ENCODE measurements at regions of chr19 and their contacts with region 1.

Region 1: DNA sequence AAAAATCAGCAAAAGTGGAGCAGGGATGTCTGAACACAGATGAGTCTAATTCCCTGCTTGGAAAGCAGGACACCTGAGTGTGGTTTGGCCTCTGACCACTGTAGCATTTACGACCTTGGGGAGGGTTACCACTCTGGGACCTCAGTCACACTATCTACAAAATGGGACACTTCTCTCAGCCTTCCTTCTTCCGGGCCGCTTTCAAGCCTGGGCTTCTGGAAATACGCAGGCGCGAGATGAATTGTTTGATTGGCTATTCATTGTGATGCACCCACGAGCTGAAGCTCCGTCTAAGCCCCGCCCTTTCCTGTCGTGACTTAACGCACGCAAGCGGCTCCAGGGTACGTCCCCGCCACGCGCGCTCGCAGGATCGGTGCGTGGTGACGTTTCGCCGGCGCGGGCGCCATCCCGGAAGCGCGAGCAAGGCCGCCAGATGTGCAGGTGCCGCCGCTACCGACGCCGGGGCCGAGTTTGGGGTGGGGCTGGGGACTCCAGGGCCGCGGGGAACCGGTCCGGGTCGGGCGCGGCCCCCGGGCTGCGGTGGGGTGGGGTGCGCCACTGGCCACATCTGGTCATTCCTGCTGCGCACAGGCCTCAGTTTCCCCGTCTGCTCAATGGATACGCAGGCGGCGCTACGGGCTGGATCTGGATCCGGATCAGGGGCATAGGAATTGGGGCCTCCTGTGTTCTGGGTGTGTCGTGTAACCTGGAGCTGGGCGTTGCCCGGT is at the start of gene KXD1:
- DNase-seq: peak; percentile 100
- ATAC-seq: peak; percentile 98
- H3K4me3 Mint-ChIP-seq: peak within 1 kb of the TSS; percentile 94
- H3K27ac Mint-ChIP-seq: peak within 1 kb of the TSS; percentile 94
- H3K4me1 Mint-ChIP-seq: peaks cover 26% of the 10 kb centered on the region
- H3K27me3 Mint-ChIP-seq: no peaks in the 10 kb centered on the region
- total RNA-seq, gene KXD1: 101 to 108 TPM

Region 2: DNA sequence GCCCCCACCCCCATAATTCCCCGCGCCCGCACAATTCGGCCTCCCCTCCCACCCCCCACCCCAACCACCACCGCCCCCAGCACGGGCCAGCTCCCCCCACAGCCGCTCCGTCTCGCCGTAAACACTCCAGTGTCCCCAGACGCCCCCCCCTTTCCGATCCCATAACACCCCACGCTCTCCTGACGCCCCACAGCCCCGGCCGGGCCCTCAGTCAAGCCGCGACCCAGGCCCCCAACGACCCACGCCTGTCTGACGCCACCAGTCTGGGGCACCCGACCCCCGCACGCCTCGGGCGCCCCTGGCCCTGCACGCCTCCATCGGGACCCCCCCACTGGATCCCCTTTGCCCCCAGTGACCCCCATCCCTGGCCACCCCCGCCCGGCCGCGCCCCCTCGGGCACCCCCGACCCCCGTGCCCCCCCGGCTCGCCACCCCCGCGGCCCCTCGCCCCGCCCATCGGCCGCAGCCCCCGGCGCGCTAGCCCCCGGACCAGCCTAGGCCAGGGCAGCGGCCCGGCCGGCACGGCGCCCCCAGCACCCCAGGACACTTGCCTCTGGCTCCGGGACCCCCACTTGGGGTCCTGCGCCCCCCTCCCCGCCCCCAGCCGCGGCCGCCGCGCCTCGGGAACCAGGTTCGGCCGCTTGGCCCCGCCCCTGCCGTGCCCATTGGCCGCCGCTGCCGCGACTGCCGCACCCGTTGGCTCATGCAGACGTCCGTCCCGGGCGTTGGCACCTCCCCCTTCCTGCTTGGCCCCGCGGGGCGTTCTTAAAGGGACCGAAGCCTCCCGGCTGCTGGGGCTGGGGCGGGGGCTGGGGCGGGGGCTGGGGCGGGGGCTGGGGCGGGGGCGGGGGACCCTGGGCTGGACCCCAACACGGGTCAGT is 14.5 kb before region 1 on chr19 and contains the start of gene FKBP8:
- CTCF ChIA-PET with region 1: interaction called, 37 read pairs
- POLR2A ChIA-PET with region 1: interaction called, 28 read pairs
- DNase-seq: peak; percentile 97
- ATAC-seq: peak; percentile 98
- H3K4me3 Mint-ChIP-seq: peak within 1 kb of the TSS; percentile 93
- H3K27ac Mint-ChIP-seq: peak within 1 kb of the TSS; percentile 99
- H3K4me1 Mint-ChIP-seq: peaks cover 30% of the 10 kb centered on the region
- H3K27me3 Mint-ChIP-seq: no peaks in the 10 kb centered on the region
- total RNA-seq, gene FKBP8: 245 to 247 TPM

Region 3: GRCh38 chr19:18588611-18589379 is 31.2 kb after region 1 on chr19 and contains the start of gene REX1BD:
- CTCF ChIA-PET with region 1: interaction called, 30 read pairs
- POLR2A ChIA-PET with region 1: interaction called, 19 read pairs
- DNase-seq: peak; percentile 93
- ATAC-seq: peak; percentile 79
- H3K4me3 Mint-ChIP-seq: peak within 1 kb of the TSS; percentile 83
- H3K27ac Mint-ChIP-seq: peak within 1 kb of the TSS; percentile 96
- H3K4me1 Mint-ChIP-seq: peaks cover 47% of the 10 kb centered on the region
- H3K27me3 Mint-ChIP-seq: no peaks in the 10 kb centered on the region
- total RNA-seq, gene REX1BD: 91.5 to 98.7 TPM

Measured in activated CD8-positive, alpha-beta T cell treated with anti-CD3 and anti-CD28 coated beads, Interleukin-2, amount 10 ng/mL, durations not matched to agents 7 days and 5 days (primary cell).